OCI-LY7 (cell line): ENCODE measurements at regions of chr10 and their contacts with region 1.

Region 1: DNA sequence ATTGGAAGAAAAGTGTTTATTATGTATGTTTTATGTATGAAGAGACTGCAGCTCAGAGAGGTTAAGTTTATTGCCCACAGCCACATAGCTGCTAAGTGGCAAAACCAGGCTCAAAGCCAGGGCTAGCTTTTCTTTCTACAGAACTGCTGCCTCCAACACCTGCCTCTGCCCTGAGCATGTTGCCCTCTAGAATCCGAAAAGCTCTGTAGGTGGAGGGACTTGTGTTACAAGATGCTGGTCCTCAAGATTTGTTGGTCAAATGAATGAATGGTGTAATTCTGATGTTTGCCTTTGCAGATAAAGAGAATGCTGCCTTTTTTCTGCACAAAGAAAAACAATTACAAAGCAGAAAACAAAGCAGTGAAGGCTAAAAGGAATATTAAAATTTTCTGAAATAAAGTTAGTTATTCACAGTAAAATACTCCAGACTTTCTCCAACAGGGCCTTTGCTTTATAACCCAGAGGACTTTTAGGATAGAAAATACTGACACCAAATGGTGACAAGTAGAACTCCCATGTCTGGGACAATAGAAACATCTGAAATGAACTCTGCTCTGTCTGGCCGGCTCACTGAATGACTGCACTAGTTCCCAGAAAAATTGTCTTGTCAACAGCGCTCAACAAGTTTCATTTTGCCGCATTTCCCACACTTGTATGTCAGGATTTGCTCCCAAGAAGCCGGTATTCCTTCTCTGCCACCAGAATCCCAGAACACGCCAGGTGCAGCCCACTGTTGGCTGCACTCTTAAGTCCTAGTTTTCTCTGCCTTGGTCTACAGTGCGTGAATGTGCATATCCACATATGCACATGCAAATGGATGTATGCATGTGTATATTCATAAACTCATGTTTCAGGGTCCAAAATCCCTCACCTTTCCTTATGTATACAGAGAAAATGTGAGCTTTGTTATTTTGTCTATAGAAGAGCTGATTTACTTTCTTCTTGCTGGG is 11.0 kb upstream of the DNTT start:
- DNase-seq: peak; percentile 87
- H3K4me3 ChIP-seq: peak overlapping the region; percentile 13
- H3K27ac ChIP-seq: peak overlapping the region; percentile 98
- H3K4me1 ChIP-seq: peaks cover 98% of the 10 kb centered on the region
- CTCF ChIP-seq: peak; percentile 96

Region 2: GRCh38 chr10:96017191-96017687 is 276.0 kb before region 1 on chr10:
- CTCF ChIA-PET with region 1: interaction called, 3 read pairs
- POLR2A ChIA-PET with region 1: no interaction called
- intact Hi-C with region 1: loop called (anchors 1 kb)
- DNase-seq: peak; percentile 77
- H3K4me3 ChIP-seq: no peak overlapping the region
- H3K27ac ChIP-seq: no peak overlapping the region
- H3K4me1 ChIP-seq: no peaks in the 10 kb centered on the region
- CTCF ChIP-seq: peak; percentile 97

Region 3: GRCh38 chr10:96089670-96090462 is 203.4 kb before region 1 on chr10:
- CTCF ChIA-PET with region 1: no interaction called
- POLR2A ChIA-PET with region 1: interaction called, 4 read pairs
- intact Hi-C with region 1: loop called (anchors 1 kb)
- DNase-seq: peak; percentile 98
- H3K4me3 ChIP-seq: peak overlapping the region; percentile 76
- H3K27ac ChIP-seq: peak overlapping the region; percentile 86
- H3K4me1 ChIP-seq: peaks cover 11% of the 10 kb centered on the region
- CTCF ChIP-seq: 0 out of 2 replicates have a peak, but pooled peaks have one; percentile 3

Region 4: DNA sequence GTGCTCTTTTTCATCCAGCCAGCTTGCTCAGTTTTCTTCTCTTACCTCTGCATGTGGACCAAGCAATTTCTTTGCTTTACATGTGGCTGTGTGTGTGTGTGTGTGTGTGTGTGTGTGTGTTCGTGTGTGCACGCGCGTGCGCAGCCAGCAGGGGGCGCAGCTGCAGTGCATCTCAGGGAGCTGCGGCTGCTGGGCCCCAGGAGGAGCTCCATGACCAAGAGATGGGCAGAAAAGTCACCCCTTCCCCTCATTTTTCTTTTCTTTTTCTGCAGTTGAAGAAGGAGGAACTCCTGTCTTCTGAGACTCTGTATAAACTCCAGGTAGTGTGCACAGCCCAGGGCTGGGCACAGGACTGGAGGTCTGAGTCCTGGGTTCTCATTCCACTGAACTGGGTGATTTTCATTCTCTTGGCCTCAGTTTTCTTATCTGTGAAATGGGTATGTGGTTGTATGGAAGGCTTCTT is 63.6 kb before region 1 on chr10:
- CTCF ChIA-PET with region 1: interaction called, 104 read pairs
- POLR2A ChIA-PET with region 1: interaction called, 80 read pairs
- intact Hi-C with region 1: loop called (anchors 1 kb)
- DNase-seq: peak; percentile 91
- H3K4me3 ChIP-seq: no peak overlapping the region
- H3K27ac ChIP-seq: peak overlapping the region; percentile 60
- H3K4me1 ChIP-seq: peaks cover 26% of the 10 kb centered on the region
- CTCF ChIP-seq: peak; percentile 100

Region 5: GRCh38 chr10:96271016-96271829 is 22.0 kb before region 1 on chr10 and contains the start of gene BLNK:
- CTCF ChIA-PET with region 1: interaction called, 5 read pairs
- POLR2A ChIA-PET with region 1: interaction called, 176 read pairs
- intact Hi-C with region 1: loop called (anchors 1 kb)
- DNase-seq: peak; percentile 89
- H3K4me3 ChIP-seq: peak within 1 kb of the TSS; percentile 90
- H3K27ac ChIP-seq: peak within 1 kb of the TSS; percentile 100
- H3K4me1 ChIP-seq: peaks cover 58% of the 10 kb centered on the region
- CTCF ChIP-seq: no peak
- total RNA-seq, gene BLNK: 78.0 and 113 TPM in 2 replicates

Region 6: GRCh38 chr10:96306516-96306915 is 13.3 kb after region 1 on chr10:
- CTCF ChIA-PET with region 1: interaction called, 4 read pairs
- POLR2A ChIA-PET with region 1: interaction called, 36 read pairs
- intact Hi-C with region 1: no loop called
- DNase-seq: peak; percentile 88
- H3K4me3 ChIP-seq: peak overlapping the region; percentile 29
- H3K27ac ChIP-seq: peak overlapping the region; percentile 42
- H3K4me1 ChIP-seq: peaks cover 36% of the 10 kb centered on the region
- CTCF ChIP-seq: no peak

Region 7: DNA sequence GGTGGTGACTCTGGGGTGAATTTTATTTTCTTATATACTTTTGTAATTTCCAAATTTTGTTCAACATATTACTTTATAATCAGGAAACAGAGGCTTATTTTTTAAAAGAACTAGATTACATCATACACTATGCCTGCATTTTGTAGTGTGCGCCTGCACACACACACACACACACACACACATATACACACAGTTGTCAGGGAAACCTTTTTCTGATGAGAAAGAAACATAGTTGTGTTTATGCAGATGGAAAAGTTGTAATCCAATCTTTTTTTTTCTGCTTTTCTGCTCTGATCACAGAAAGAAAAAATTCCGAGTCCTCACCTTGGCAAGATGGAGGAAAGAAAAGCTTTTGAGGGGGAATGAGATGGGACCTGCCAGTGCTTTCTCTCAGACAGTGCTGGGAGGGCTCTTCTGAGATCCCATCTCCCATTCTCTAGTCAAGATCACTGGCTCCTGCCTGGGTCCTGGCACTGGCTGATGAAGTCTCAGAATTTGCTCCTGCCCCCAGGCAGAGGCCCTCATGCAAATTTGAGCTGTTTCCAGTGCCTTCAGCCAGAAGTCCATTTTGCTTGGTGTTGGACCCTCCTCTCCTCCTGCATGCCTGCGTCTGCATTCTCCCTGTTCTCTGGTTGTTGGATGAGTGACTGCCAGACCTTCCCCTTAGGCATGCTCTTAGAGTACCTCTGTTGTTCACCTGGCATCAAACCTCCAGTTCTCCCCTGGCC is 160.8 kb after region 1 on chr10:
- CTCF ChIA-PET with region 1: no interaction called
- POLR2A ChIA-PET with region 1: no interaction called
- intact Hi-C with region 1: no loop called
- DNase-seq: no peak
- H3K4me3 ChIP-seq: no peak overlapping the region
- H3K27ac ChIP-seq: no peak overlapping the region
- H3K4me1 ChIP-seq: no peaks in the 10 kb centered on the region
- CTCF ChIP-seq: no peak

Region 8: GRCh38 chr10:96586419-96587263 is 293.4 kb after region 1 on chr10 and contains the start of gene TM9SF3:
- CTCF ChIA-PET with region 1: no interaction called
- POLR2A ChIA-PET with region 1: no interaction called
- intact Hi-C with region 1: no loop called
- DNase-seq: peak; percentile 91
- H3K4me3 ChIP-seq: peak within 1 kb of the TSS; percentile 99
- H3K27ac ChIP-seq: peak within 1 kb of the TSS; percentile 88
- H3K4me1 ChIP-seq: peaks cover 42% of the 10 kb centered on the region
- CTCF ChIP-seq: no peak
- total RNA-seq, gene TM9SF3: 20.8 and 23.0 TPM in 2 replicates